IMR-90 (cell line): ENCODE measurements at regions of chr22 and their contacts with region 1.

Region 1: DNA sequence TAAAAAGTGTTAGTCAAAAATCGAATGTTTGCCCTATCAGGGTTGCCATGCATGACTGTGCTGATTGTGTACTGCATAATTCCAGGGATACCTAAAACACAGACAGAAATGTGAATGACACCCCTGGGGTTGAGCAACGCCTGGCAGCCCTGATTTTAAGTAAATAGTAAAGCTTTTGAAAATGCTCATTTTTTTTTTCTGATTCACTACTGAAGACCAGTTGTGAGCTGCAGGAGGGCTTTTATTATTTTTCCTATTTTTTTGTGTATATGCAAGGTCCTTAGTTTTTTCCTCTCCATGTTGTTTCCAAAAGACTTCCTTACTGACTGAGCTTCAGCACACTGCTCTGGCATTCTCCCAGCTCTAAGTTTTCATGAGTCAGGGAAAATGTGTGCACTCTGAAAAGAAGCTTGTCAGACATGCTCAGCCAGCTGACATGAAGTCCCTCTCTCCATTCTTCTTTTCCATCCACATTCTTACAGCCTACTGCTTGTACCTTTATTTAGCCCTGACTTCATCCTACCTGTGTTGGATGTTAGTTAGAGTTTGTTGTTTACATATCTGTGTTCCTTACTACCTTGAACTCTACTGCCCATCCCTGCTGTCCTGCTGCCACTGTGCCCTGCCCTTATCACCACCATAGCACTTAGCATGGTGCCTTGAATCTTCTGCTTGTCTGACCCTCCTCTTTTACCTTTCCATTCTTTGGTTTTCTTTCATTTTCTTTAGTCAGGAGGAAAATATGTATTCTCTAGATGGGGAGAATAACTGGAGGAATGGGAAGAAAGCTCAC is 79.5 kb downstream of the HORMAD2 start:
- DNase-seq: peak; percentile 86
- ATAC-seq: peak; percentile 89
- H3K4me3 ChIP-seq: no peak overlapping the region
- H3K27ac ChIP-seq: peak overlapping the region; percentile 84; the same call in 1 of the 2 replicates
- H3K4me1 ChIP-seq: peaks cover 9% of the 10 kb centered on the region
- H3K27me3 ChIP-seq: no peaks in the 10 kb centered on the region
- CTCF ChIP-seq: no peak
- POLR2A ChIP-seq: no peak
- RAD21 ChIP-seq: no peak

Region 2: DNA sequence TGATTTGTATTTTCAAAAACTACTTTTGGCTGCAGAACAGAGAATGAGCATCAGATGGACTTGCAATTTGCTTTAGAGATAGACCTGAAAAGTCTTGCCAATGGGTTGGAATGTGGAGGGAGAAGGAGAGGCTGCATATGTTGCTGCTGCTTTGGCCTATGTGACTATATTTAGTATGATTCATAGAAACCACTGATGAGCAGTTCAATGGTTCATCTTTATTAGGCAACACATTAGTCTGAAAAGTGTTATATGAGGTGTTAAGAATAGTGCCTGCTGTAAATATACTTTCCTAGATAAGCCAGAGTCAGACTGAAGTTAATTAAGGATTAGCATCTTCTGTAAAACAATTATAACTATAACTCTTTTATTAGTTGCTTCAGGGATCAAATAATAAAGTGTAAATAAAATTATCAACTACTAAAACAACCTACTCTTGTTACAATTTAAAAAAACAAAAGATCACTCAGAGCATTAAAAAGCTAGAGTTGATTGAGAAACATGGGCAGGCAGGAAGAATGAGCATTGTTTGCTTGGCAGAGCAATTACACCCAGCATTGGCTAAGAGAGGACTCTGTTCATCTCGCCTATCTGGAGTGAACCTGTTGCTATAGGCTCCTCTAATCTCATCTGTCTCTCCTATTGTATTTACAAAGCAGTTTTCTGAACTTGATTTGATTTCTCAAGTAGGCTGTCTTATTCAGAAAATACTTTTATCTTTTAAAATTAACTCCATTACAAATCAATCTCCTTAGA is 43.2 kb before region 1 on chr22:
- CTCF ChIA-PET with region 1: no interaction called
- POLR2A ChIA-PET with region 1: no interaction called
- dilution Hi-C with region 1: no loop called
- in situ Hi-C with region 1: no loop called
- intact Hi-C with region 1: loop called (anchors 5 kb)
- DNase-seq: peak; percentile 78
- ATAC-seq: peak; percentile 72
- H3K4me3 ChIP-seq: no peak overlapping the region
- H3K27ac ChIP-seq: no peak overlapping the region
- H3K4me1 ChIP-seq: peaks cover 12% of the 10 kb centered on the region
- H3K27me3 ChIP-seq: no peaks in the 10 kb centered on the region
- CTCF ChIP-seq: no peak
- POLR2A ChIP-seq: no peak
- RAD21 ChIP-seq: no peak

Region 3: DNA sequence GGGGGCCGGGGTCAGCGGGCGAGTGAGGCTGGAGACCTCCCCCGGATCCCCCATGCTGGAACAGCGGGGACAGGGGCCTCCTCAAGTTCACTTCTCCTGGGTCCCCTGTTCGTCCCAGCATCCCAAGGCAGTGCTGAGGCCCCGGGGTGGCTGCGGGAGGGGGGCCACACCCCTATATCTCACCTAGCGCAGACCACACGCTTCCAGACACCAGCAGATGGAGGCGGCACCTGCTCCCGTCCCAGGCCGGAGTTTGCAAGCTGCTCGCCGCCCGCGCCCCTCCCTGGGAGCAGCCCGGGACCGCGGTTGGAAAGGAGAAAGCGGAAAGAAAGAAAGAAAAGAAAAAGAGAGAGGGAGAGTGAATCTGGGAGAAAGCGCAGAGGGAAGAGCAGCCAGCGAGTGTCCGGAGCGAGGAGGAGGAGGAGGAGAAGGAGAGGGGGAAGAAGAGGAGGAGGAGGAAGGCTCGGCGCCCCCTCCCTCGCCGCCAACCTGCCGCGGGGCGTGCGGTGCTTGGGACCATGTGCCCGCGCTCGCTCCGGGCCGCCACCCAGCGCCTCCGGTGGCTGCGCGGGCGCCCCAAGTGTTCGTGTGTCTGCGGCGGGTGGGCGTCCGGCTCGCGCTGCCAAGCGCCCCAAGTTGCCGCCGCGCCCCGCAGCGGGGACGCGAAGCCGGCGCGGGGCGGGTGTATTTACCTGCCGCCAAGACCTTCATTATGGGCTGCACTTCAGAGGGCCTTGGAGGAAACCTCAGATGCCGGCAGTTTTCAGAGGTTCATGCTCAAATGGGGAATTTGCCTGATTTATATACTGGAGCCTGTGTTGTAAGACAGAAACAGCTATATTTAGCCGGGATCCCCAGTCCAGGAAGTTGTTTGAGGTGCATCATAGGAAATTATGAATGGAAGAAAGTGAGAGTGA is 86.5 kb after region 1 on chr22 and contains the start of gene LIF:
- CTCF ChIA-PET with region 1: no interaction called
- POLR2A ChIA-PET with region 1: no interaction called
- dilution Hi-C with region 1: no loop called
- in situ Hi-C with region 1: no loop called
- intact Hi-C with region 1: loop called (anchors 5 kb)
- DNase-seq: peak; percentile 86
- ATAC-seq: peak; percentile 6
- H3K4me3 ChIP-seq: peak within 1 kb of the TSS; percentile 87
- H3K27ac ChIP-seq: peak within 1 kb of the TSS; percentile 100
- H3K4me1 ChIP-seq: peaks cover 65% of the 10 kb centered on the region
- H3K27me3 ChIP-seq: no peaks in the 10 kb centered on the region
- CTCF ChIP-seq: 0 out of 2 replicates have a peak, but pooled peaks have one; percentile 12
- POLR2A ChIP-seq: peak; percentile 98
- RAD21 ChIP-seq: no peak
- total RNA-seq, gene LIF: 79.4 and 130 TPM in 2 replicates

Region 4: DNA sequence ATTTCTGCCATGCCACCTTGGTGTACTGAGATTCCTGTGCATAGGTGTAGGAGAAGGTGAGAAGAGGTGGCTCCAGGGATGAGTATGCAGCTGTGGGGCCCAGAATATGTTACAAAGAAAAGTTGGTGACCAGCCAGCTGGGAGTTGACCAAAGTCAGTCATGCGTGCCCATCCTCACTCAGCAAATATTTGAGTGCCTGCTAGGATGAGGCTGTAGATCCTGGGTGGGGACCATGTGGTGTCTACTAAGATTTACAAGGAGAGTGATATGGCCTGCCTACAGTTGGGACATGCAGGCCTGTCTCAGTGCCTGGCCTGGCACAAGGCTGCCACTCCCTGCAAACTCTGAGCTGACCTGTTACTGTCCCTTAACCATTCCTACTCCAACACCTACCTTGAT is 1019.6 kb after region 1 on chr22:
- CTCF ChIA-PET with region 1: no interaction called
- POLR2A ChIA-PET with region 1: no interaction called
- dilution Hi-C with region 1: no loop called
- in situ Hi-C with region 1: no loop called
- intact Hi-C with region 1: no loop called
- DNase-seq: peak; percentile 23
- ATAC-seq: no peak
- H3K4me3 ChIP-seq: no peak overlapping the region
- H3K27ac ChIP-seq: peak overlapping the region; percentile 1; the same call in 1 of the 2 replicates
- H3K4me1 ChIP-seq: peaks cover 19% of the 10 kb centered on the region
- H3K27me3 ChIP-seq: no peaks in the 10 kb centered on the region
- CTCF ChIP-seq: no peak
- POLR2A ChIP-seq: no peak
- RAD21 ChIP-seq: no peak